Common myeloid progenitor, CD34-positive (primary cell): ENCODE measurements at regions of chr12 and their contacts with region 1.

Region 1: GRCh38 chr12:132445884-132446632 is 43.9 kb upstream of the FBRSL1 start:
- DNase-seq: peak; percentile 74 to 97 (median 91)
- H3K4me3 ChIP-seq: peak overlapping the region in 4 of 7 experiments; percentile 32 to 66 (median 52)
- H3K27ac ChIP-seq: peak overlapping the region; percentile 72 to 81
- H3K4me1 ChIP-seq: peaks cover 3 to 46% (median 40%) of the 10 kb centered on the region in 4 experiments
- H3K27me3 ChIP-seq: no peaks in the 10 kb centered on the region

Region 2: GRCh38 chr12:132243596-132244310 is 202.3 kb before region 1 on chr12:
- CTCF ChIA-PET with region 1: no interaction called
- POLR2A ChIA-PET with region 1: no interaction called
- DNase-seq: peak in 2 of 3 donors; percentile 13 to 24
- H3K4me3 ChIP-seq: no peak overlapping the region
- H3K27ac ChIP-seq: no peak overlapping the region
- H3K4me1 ChIP-seq: peaks cover 0 to 10% (median 3%) of the 10 kb centered on the region in 4 experiments
- H3K27me3 ChIP-seq: no peaks in the 10 kb centered on the region

Region 3: DNA sequence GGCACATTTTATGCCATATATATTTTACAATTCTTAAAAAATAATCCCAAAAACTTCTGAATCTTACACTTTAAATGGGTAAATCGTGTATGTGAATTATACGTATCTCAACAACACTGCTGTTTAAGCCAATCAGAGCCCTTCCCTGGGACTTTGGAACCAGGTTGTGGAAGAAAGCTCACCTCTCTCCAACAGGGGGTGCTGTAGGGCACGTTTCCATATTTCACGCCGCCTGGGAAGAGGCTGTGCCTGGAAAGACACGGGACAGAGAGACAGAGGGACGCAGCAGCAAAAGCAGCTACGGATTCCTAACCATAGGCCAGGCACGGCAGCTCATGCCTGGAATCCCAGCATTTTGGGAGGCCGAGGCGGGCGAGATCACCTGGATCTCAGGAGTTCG is 14.5 kb after region 1 on chr12:
- CTCF ChIA-PET with region 1: interaction called, 21 read pairs
- POLR2A ChIA-PET with region 1: no interaction called
- DNase-seq: no peak
- H3K4me3 ChIP-seq: no peak overlapping the region
- H3K27ac ChIP-seq: no peak overlapping the region
- H3K4me1 ChIP-seq: peaks cover 0 to 13% (median 7%) of the 10 kb centered on the region in 4 experiments
- H3K27me3 ChIP-seq: no peaks in the 10 kb centered on the region